Activated CD4-positive, alpha-beta memory T cell treated with anti-CD3 and anti-CD28 coated beads for 36 hours (primary cell): ENCODE measurements at regions of chr1 and their contacts with region 1.

Region 1: DNA sequence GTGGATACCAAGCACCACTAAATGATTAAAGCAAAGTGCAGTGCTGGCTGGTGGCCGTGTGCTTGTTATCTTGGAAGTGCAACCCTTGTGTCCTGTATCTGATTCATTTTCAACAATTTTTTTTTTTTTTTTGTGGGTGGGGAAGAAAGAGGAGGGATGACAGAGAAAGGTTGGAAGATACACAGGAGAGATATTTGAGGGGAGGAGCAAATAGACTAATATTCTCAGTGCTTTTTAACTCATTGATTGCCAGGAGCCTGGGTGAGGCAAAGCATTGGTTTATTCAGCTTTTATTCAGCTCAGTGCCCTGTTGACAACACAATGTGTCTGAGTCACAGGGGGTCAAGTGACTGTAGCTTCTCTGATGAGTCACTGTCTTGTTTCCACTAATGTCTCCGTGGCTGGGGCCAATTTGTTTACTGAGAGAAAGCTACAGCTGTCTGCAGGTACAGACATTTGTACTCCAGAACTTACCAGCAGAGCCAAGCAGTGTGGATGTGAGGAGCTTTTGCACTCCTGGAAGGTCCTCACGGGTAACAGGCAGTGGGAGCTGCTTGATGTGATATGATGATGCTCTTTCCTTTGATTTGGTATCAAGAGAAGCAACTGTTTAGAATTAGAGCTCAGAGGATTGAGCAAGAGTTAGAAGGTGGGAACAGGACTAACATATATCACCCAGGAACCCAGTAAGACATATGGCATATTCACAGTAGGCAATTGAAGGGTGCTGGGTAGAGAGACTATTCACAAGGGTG is 23.6 kb upstream of the DNM3 start:
- DNase-seq: peak; percentile 70
- H3K4me3 Mint-ChIP-seq: no peak overlapping the region
- H3K27ac Mint-ChIP-seq: peak overlapping the region; percentile 61
- H3K4me1 Mint-ChIP-seq: peaks cover 15% of the 10 kb centered on the region
- H3K27me3 Mint-ChIP-seq: no peaks in the 10 kb centered on the region

Region 2: DNA sequence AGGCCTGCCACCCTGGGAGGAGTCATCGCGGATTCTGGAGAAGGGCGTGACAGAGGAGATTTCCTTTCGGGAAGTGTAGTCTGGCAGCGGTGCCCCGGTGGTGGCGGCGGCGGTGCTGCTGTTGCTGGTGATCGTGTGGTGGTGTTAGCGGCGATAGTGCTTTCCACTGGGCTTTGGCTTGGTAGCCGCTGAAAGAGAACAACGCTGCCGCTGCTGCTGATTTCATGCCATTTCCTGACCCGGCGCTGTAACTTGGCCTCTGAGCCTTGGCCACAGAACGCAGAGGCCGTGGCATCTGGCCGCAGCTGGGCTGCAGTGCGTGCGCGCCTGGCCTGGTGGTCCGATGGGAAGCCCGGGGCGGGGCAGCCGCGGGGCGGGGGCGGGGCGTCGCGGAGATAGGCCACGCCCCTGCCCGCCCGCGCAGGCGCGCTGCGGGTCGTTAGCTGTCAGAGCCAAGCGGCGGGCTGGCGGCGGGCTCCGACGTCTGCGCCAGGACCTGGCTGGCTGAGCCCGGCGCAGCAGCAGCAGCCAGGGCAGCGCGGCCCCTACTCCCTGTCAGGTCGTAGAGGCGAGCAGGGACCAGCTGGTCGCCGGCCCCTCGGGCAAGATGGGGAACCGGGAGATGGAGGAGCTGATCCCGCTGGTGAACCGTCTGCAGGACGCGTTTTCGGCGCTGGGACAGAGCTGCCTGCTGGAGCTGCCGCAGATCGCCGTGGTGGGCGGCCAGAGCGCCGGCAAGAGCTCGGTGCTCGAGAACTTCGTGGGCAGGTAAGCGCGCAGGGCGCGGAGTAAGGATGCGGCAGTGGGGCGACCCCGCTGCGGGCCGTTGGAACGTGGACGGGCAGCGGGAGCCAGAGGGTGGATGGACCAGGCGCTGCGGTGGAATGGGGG is 23.6 kb after region 1 on chr1 and contains the start of gene DNM3:
- CTCF ChIA-PET with region 1: no interaction called
- POLR2A ChIA-PET with region 1: interaction called, 3 read pairs
- intact Hi-C with region 1: loop called (anchors 2 kb)
- DNase-seq: peak; percentile 81
- H3K4me3 Mint-ChIP-seq: peak within 1 kb of the TSS; percentile 77
- H3K27ac Mint-ChIP-seq: no peak within 1 kb of the TSS
- H3K4me1 Mint-ChIP-seq: peaks cover 12% of the 10 kb centered on the region
- H3K27me3 Mint-ChIP-seq: peaks cover 14% of the 10 kb centered on the region
- total RNA-seq, gene DNM3: 0.93 to 1.2 TPM

Region 3: GRCh38 chr1:171883849-171884248 is 66.2 kb after region 1 on chr1:
- CTCF ChIA-PET with region 1: no interaction called
- POLR2A ChIA-PET with region 1: no interaction called
- intact Hi-C with region 1: loop called (anchors 1 kb)
- DNase-seq: peak; percentile 40
- H3K4me3 Mint-ChIP-seq: no peak overlapping the region
- H3K27ac Mint-ChIP-seq: no peak overlapping the region
- H3K4me1 Mint-ChIP-seq: peaks cover 7% of the 10 kb centered on the region
- H3K27me3 Mint-ChIP-seq: no peaks in the 10 kb centered on the region